Activated B cell treated with CpG ODN at 0.5 μM for 24 hours (primary cell): ENCODE measurements at regions of chr16 and their contacts with region 1.

Region 1: DNA sequence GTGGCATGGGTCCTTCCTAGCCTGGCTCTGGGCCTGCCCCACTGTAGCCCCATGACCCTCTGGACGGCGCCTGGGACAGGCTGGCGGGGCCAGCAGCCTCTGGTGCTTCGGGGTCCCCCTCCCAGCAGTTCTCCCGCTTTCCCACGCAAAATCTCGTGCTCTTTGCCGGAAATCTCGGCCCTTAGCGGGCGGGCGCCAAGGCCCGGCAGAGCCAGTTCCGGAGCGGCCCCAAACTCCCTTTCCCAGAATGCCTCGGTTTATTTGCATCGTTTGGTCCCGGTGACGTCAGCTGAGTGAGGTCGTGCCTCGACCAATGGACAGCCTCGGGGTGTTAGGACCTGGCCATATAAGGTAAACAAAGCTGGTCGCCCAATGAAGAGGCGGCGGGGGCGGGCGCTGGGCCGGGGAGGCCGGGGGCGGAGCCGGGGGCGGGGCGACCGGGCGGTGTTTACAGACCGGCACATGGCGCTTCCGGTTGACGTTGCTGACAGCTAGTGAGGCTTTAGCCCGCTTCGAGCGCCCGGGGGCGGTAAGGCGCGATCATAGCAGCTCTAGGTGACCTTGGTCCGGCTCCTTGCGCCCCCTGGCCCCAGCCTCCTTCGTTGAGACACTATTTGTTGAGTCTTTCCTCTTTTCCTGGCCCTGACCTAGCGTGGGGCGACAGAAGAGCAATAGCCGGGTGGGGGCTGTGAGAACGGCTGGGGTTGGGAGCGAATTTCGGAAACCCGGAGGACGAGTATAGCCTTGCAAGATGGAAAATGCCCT is 1.5 kb upstream of the UBALD1 start:
- DNase-seq: peak; percentile 94
- ATAC-seq: peak; percentile 82
- H3K4me3 Mint-ChIP-seq: peak overlapping the region; percentile 92
- H3K27ac Mint-ChIP-seq: peak overlapping the region; percentile 98
- H3K4me1 Mint-ChIP-seq: peaks cover 33% of the 10 kb centered on the region
- H3K27me3 Mint-ChIP-seq: no peaks in the 10 kb centered on the region
- CTCF ChIP-seq: no peak

Region 2: GRCh38 chr16:4271176-4272066 is 344.8 kb before region 1 on chr16:
- CTCF ChIA-PET with region 1: no interaction called
- POLR2A ChIA-PET with region 1: interaction called, 3 read pairs
- intact Hi-C with region 1: loop called (anchors 5 kb)
- DNase-seq: peak; percentile 82
- ATAC-seq: peak; percentile 81
- H3K4me3 Mint-ChIP-seq: peak overlapping the region; percentile 86
- H3K27ac Mint-ChIP-seq: peak overlapping the region; percentile 88
- H3K4me1 Mint-ChIP-seq: peaks cover 11% of the 10 kb centered on the region
- H3K27me3 Mint-ChIP-seq: no peaks in the 10 kb centered on the region
- CTCF ChIP-seq: no peak

Region 3: GRCh38 chr16:4425378-4426020 is 190.7 kb before region 1 on chr16 and contains the start of gene DNAJA3:
- CTCF ChIA-PET with region 1: no interaction called
- POLR2A ChIA-PET with region 1: interaction called, 5 read pairs
- intact Hi-C with region 1: loop called (anchors 2 kb)
- DNase-seq: peak; percentile 93
- ATAC-seq: peak; percentile 90
- H3K4me3 Mint-ChIP-seq: peak within 1 kb of the TSS; percentile 97
- H3K27ac Mint-ChIP-seq: peak within 1 kb of the TSS; percentile 100
- H3K4me1 Mint-ChIP-seq: peaks cover 31% of the 10 kb centered on the region
- H3K27me3 Mint-ChIP-seq: no peaks in the 10 kb centered on the region
- CTCF ChIP-seq: no peak
- total RNA-seq, gene DNAJA3: 55.3 and 62.6 TPM in 2 replicates

Region 4: GRCh38 chr16:4506450-4506849 is 109.8 kb before region 1 on chr16:
- CTCF ChIA-PET with region 1: interaction called, 12 read pairs
- POLR2A ChIA-PET with region 1: interaction called, 13 read pairs
- intact Hi-C with region 1: loop called (anchors 1 kb)
- DNase-seq: peak; percentile 31
- ATAC-seq: peak; percentile 39
- H3K4me3 Mint-ChIP-seq: peak overlapping the region; percentile 29
- H3K27ac Mint-ChIP-seq: peak overlapping the region; percentile 93
- H3K4me1 Mint-ChIP-seq: peaks cover 40% of the 10 kb centered on the region
- H3K27me3 Mint-ChIP-seq: no peaks in the 10 kb centered on the region
- CTCF ChIP-seq: peak; percentile 46

Region 5: GRCh38 chr16:4649744-4650442 is 33.7 kb after region 1 on chr16:
- CTCF ChIA-PET with region 1: interaction called, 3 read pairs
- POLR2A ChIA-PET with region 1: no interaction called
- intact Hi-C with region 1: loop called (anchors 1 kb)
- DNase-seq: no peak
- ATAC-seq: no peak
- H3K4me3 Mint-ChIP-seq: no peak overlapping the region
- H3K27ac Mint-ChIP-seq: no peak overlapping the region
- H3K4me1 Mint-ChIP-seq: peaks cover 27% of the 10 kb centered on the region
- H3K27me3 Mint-ChIP-seq: no peaks in the 10 kb centered on the region
- CTCF ChIP-seq: no peak

Region 6: GRCh38 chr16:4734063-4734729 is 118.0 kb after region 1 on chr16 and contains the starts of genes ANKS3 and DNAAF8:
- CTCF ChIA-PET with region 1: interaction called, 7 read pairs
- POLR2A ChIA-PET with region 1: interaction called, 16 read pairs
- intact Hi-C with region 1: loop called (anchors 1 kb)
- DNase-seq: peak; percentile 84
- ATAC-seq: peak; percentile 77
- H3K4me3 Mint-ChIP-seq: peak within 1 kb of the TSS; percentile 90
- H3K27ac Mint-ChIP-seq: peak within 1 kb of the TSS; percentile 87
- H3K4me1 Mint-ChIP-seq: peaks cover 18% of the 10 kb centered on the region
- H3K27me3 Mint-ChIP-seq: no peaks in the 10 kb centered on the region
- CTCF ChIP-seq: no peak
- total RNA-seq, gene ANKS3: 17.9 and 21.9 TPM in 2 replicates
- total RNA-seq, gene DNAAF8: 0.29 and 0.31 TPM in 2 replicates

Region 7: DNA sequence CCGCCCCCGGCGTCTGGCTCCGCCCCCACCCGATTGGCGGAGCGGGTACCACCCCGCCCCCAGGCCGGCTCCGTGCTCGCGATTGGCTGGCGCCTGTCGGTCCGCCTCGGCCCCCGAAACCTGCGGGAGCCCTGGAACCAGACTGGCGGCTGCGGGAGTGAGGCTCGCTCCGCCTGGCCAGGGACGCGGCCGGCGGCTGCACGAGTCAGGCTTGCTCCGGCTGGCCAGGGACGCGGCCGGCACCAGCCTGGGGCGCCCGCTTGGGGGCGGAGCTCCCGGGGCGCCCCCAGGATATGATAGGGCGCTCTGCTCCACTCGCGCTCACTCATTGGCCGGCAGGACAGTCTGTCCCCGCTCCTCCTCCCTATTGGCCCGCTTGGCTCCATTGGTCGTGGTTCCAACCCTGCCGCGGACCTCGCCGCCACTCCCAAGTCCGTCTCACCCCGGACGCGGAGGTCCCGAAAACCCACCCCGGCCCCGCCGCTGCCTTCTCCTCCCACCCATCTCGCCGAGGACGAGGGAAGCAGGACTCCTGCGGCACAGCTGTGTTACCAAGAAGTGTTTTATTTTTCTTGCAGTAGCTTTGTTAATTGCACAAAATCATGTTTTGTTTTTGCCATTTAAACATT is 186.5 kb after region 1 on chr16:
- CTCF ChIA-PET with region 1: no interaction called
- POLR2A ChIA-PET with region 1: interaction called, 3 read pairs
- intact Hi-C with region 1: loop called (anchors 1 kb)
- DNase-seq: peak; percentile 97
- ATAC-seq: peak; percentile 88
- H3K4me3 Mint-ChIP-seq: peak overlapping the region; percentile 86
- H3K27ac Mint-ChIP-seq: peak overlapping the region; percentile 69
- H3K4me1 Mint-ChIP-seq: peaks cover 25% of the 10 kb centered on the region
- H3K27me3 Mint-ChIP-seq: no peaks in the 10 kb centered on the region
- CTCF ChIP-seq: no peak